ENCODE measurements at regions of chr7 and their contacts with region 1.

Region 1: GRCh38 chr7:32539919-32540531 is 44.7 kb downstream of the AVL9 start:
- DNase-seq: no peak
- H3K4me3 ChIP-seq: no peak overlapping the region
- H3K27ac ChIP-seq: no peak overlapping the region
- H3K4me1 ChIP-seq: no peaks in the 10 kb centered on the region
- CTCF ChIP-seq: no peak

Region 2: DNA sequence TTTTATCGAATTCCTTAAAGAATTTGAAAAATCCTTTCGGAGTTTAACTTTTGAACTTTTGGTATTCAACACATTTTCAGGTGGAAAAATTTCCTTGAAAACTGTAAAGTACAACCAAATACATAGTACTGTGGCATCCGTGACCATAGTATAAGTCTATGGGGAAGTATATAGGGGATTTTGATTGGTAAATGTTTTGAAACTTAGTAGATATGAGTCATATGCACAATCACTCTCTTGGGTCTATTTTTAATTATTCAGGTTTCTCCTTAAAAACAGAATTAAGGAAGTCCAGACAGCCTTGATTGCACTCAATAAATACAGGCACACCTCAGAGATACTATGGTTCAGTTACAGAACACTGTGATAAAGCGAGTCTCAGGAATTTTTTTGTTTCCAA is 19.5 kb after region 1 on chr7:
- CTCF ChIA-PET with region 1: no interaction called
- POLR2A ChIA-PET with region 1: interaction called, 10 read pairs
- intact Hi-C with region 1: no loop called
- DNase-seq: no peak
- H3K4me3 ChIP-seq: no peak overlapping the region
- H3K27ac ChIP-seq: no peak overlapping the region
- H3K4me1 ChIP-seq: no peaks in the 10 kb centered on the region
- CTCF ChIP-seq: no peak

Region 3: DNA sequence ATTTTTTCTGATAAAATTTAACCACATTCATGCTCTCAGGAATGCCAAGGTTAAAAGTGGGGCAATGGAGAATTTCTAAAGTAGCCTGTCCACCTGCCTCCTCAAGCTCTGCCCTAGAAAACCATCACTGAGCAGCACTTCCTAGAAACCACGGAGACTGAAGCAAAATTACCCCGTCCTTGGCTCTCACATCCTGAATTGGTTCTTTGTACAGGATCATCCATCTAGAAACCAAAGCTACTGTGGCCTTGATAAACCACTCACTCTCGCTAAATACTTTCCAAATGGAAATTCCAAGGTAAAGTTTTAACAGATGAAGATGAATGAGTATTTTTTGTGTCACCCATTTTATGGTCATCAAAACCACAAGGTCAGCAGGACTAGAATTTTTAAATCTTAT is 51.9 kb after region 1 on chr7:
- CTCF ChIA-PET with region 1: no interaction called
- POLR2A ChIA-PET with region 1: no interaction called
- intact Hi-C with region 1: no loop called
- DNase-seq: no peak
- H3K4me3 ChIP-seq: no peak overlapping the region
- H3K27ac ChIP-seq: no peak overlapping the region
- H3K4me1 ChIP-seq: no peaks in the 10 kb centered on the region
- CTCF ChIP-seq: no peak